ENCODE measurements at regions of chr15 and their contacts with region 1.

Region 1: DNA sequence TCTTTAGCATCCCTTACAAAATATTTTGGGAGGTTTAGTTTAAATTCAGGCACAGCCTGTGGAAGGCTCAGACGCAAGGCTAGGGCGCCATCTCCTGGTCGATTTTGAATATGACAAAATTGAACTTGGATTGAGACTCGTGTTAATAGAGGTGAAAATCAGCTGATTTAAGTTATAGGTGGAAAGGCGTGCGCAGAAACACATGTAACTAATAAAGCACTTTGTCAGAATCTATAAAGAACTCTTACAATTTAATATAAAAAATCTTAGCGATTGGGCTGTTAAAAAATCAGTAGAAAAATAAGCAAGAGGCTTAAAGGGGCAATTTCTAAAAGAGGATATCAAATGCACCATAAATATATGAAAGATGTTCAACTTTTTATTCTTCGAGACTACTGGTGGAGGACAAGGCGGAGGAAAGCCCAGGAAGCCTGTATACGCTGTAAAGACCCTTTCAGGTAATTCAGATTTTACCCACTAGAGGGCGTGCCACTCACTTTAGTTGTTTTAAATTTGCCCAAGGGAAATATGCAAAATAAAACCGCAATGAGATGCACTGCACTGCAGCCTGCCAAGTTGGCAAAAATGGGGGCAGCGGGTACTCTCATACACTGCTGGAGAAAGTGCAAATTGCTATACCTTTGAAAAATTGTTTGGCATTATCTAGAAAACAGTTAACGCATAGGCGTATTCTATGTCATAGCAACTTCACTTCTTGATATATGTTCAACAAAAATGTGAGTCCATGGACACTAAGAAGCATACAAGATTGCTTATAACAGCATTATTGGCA is 64.7 kb downstream of the SLC30A4 start:
- DNase-seq: peak; percentile 59
- ATAC-seq: peak; percentile 84 to 86
- H3K4me3 ChIP-seq: peak overlapping the region; percentile 54
- H3K27ac ChIP-seq: peak overlapping the region; percentile 73
- H3K4me1 ChIP-seq: peaks cover 30% of the 10 kb centered on the region
- H3K27me3 ChIP-seq: no peaks in the 10 kb centered on the region
- CTCF ChIP-seq: peak; percentile 79

Region 2: GRCh38 chr15:45573961-45574629 is 116.3 kb after region 1 on chr15:
- intact Hi-C with region 1: no loop called
- DNase-seq: no peak
- ATAC-seq: peak in 1 of 2 donors; percentile 19
- H3K4me3 ChIP-seq: no peak overlapping the region
- H3K27ac ChIP-seq: no peak overlapping the region
- H3K4me1 ChIP-seq: no peaks in the 10 kb centered on the region
- H3K27me3 ChIP-seq: peaks cover 4% of the 10 kb centered on the region
- CTCF ChIP-seq: no peak

Region 3: DNA sequence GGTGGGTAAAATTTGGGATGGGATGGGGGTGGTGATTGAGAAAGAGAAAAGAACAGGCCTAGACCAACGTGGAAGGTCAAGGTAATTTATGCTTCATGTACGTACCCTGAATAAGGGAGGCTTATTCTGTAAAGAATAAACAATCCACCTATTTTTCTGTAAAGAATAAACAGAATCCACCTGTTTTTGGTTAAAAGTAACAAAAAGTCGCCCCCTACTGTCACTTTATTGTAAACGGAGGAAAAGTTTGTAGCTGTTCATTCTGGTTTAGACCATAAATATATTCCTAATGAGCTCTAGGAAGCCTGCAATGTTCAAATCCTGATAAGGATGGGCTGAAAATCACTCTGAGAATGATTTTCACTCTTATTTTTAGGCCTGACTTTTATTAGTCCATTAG is 153.5 kb after region 1 on chr15:
- intact Hi-C with region 1: loop called (anchors 2 kb)
- DNase-seq: no peak
- ATAC-seq: no peak
- H3K4me3 ChIP-seq: no peak overlapping the region
- H3K27ac ChIP-seq: no peak overlapping the region
- H3K4me1 ChIP-seq: no peaks in the 10 kb centered on the region
- H3K27me3 ChIP-seq: no peaks in the 10 kb centered on the region
- CTCF ChIP-seq: peak; percentile 32

Measured in lower lobe of right lung (tissue), 2 donors.